ENCODE measurements at regions of chr9 and their contacts with region 1.

Region 1: DNA sequence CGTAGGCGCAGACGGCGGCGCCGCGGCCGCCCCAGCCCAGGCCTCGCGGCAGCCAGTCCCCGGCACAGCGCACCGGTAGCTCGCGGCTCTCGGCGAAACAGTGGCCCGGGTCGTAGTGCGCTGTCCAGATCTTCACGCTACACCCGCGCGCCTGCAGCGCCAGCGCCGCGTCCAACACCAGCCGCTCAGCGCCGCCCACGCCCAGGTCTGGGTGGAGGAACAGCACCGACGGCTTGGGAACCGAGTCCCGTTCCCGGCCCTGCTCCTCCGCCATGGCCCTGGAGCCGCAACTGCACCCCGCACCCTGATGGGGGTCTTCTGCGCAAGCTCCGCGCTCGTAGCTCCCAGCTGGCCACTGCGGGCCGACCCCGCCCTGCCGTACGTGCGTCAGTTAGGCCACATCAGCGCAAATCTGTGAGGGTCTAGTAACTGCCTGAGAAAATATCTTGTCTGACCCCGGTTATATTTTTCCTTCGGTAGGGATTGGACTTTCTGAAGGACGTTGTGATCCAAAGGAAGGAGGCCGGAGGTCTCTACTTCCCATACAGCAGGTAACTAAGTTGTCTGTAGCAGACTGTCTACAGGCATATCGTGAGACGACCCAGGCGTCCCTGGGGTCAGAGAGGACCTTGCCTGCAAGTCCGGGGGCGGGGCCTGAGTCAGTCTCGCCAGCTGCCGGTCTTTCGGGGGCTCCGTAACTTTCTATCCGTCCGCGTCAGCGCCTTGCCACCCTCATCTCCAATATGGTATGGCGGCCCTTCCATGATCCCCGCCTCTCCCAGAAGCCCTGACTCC is at the starts of genes ALG2 and SEC61B:
- DNase-seq: peak; percentile 92 to 96 (median 94)
- H3K4me3 ChIP-seq: peak within 1 kb of the TSS; percentile 56 to 100 (median 97)
- H3K27ac ChIP-seq: peak within 1 kb of the TSS; percentile 87 to 100 (median 97)
- H3K27me3 ChIP-seq: no peaks in the 10 kb centered on the region
- CTCF ChIP-seq: peak in 26 of 56 donors; percentile 2 to 50 (median 25)
- total RNA-seq, gene ALG2: 11.4 to 25.3 (median 18.2) TPM
- total RNA-seq, gene SEC61B: 25.3 to 59.2 (median 38.7) TPM

Region 2: GRCh38 chr9:99259231-99259918 is 37.6 kb after region 1 on chr9:
- intact Hi-C with region 1: loop called in 1 of 2 experiments (anchors 2 kb)
- DNase-seq: peak; percentile 70 to 96 (median 84)
- H3K4me3 ChIP-seq: peak overlapping the region; percentile 13 to 72 (median 53)
- H3K27ac ChIP-seq: peak overlapping the region; percentile 38 to 94 (median 85)
- H3K27me3 ChIP-seq: no peaks in the 10 kb centered on the region
- CTCF ChIP-seq: peak in 7 of 56 donors; percentile 7 to 43 (median 10)

Region 3: DNA sequence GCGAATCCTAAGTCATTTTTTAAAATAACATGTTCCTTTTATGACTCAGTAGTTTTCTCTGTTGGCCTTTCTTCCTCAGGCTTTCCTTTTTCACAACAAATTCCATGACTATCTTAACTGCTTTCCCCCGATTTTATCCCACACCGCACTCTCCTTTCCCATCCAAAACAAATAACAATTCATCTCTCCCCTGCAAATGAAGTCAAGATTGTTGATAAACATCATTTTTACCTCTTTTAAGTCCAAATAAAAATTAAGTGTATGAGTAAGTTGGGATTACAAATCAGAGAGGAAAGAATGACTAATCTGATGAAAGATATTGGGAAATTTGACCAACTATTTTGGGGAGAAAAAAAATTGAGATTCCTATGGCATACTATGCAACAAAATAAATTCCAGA is 47.6 kb after region 1 on chr9:
- intact Hi-C with region 1: no loop called
- DNase-seq: no peak
- H3K4me3 ChIP-seq: no peak overlapping the region
- H3K27ac ChIP-seq: no peak overlapping the region
- H3K27me3 ChIP-seq: no peaks in the 10 kb centered on the region
- CTCF ChIP-seq: no peak

Region 4: GRCh38 chr9:100098887-100099721 is 877.3 kb after region 1 on chr9 and contains the starts of genes ERP44 and INVS:
- intact Hi-C with region 1: loop called in 1 of 2 experiments (anchors 1 kb)
- DNase-seq: peak; percentile 99 to 100 (median 100)
- H3K4me3 ChIP-seq: peak within 1 kb of the TSS; percentile 65 to 100 (median 95)
- H3K27ac ChIP-seq: peak within 1 kb of the TSS; percentile 48 to 98 (median 90)
- H3K27me3 ChIP-seq: no peaks in the 10 kb centered on the region
- CTCF ChIP-seq: peak in 17 of 56 donors; percentile 3 to 39 (median 19)
- total RNA-seq, gene ERP44: 11.9 to 21.4 (median 16.7) TPM
- total RNA-seq, gene INVS: 13.3 to 35.5 (median 22.7) TPM

Measured in dorsolateral prefrontal cortex (tissue), 120 donors.